CD8-positive, alpha-beta memory T cell (primary cell): ENCODE measurements at regions of chr15 and their contacts with region 1.

Region 1: DNA sequence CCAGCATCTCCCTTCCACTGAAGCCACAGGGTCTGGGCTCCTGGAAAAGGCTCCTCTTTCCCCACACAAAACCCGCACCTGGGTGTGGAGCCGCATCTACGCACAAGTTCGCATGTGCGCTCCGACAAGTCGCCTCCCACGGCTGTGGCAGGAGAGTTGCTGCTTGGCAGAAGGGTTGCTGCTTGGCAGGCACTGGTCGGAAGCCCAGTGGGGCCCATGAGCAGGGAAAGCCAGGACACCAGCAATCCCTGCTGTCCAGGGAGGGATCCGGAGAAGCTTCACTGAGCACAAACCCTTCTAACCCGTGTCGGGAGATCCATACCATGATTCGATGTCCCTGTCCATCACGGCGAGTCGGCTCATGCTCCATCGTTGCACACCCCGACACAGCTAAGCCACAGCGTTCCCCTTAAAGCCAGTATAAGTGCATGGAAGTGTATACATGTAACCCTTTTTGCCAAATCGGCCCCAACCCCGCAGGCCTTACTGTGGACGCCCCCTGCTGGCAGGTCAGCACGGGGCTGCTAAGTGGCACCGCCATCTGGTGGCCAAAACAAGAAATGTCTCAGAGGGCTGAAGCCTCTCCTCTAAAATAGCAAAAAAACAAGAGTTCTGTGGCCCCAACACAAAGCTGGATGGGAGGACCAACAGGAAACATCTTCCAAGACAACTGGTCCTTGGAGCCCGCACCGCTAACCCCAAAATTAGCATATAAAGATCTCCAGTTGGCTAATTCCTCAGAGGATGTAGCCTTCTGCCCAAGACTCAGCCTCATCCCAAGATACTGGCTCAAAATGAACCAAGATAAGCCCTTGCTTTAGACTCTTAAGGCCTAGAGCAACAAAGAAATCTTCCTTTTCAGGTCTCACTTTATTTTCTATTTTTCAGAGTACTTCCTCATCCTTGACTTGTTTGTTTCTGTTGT is 8.3 kb downstream of the ANKRD63 start:
- DNase-seq: peak; percentile 81 to 90 (median 83)
- H3K4me3 ChIP-seq: no peak overlapping the region
- H3K4me3 Mint-ChIP-seq: peak overlapping the region in 1 of 7 donors; percentile 22
- H3K27ac ChIP-seq: no peak overlapping the region
- H3K27ac Mint-ChIP-seq: no peak overlapping the region
- H3K4me1 ChIP-seq: peaks cover 5% of the 10 kb centered on the region
- H3K4me1 Mint-ChIP-seq: peaks cover 4 to 10% (median 5%) of the 10 kb centered on the region in 3 donors
- H3K27me3 ChIP-seq: peaks cover 16% of the 10 kb centered on the region
- H3K27me3 Mint-ChIP-seq: peaks cover 4 to 27% of the 10 kb centered on the region in 2 donors

Region 2: GRCh38 chr15:40044717-40045571 is 229.7 kb before region 1 on chr15:
- CTCF ChIA-PET with region 1: interaction called, 97 read pairs
- POLR2A ChIA-PET with region 1: no interaction called
- DNase-seq: peak; percentile 67 to 86 (median 72)
- H3K4me3 ChIP-seq: peak overlapping the region; percentile 9
- H3K4me3 Mint-ChIP-seq: peak overlapping the region in 6 of 7 donors; percentile 43 to 78 (median 63)
- H3K27ac ChIP-seq: no peak overlapping the region
- H3K27ac Mint-ChIP-seq: peak overlapping the region; percentile 21 to 83 (median 55)
- H3K4me1 ChIP-seq: peaks cover 57% of the 10 kb centered on the region
- H3K4me1 Mint-ChIP-seq: peaks cover 50 to 64% (median 60%) of the 10 kb centered on the region in 3 donors
- H3K27me3 ChIP-seq: no peaks in the 10 kb centered on the region
- H3K27me3 Mint-ChIP-seq: no peaks in the 10 kb centered on the region

Region 3: GRCh38 chr15:40217159-40217824 is 57.3 kb before region 1 on chr15:
- CTCF ChIA-PET with region 1: interaction called, 103 read pairs
- POLR2A ChIA-PET with region 1: interaction called, 4 read pairs
- DNase-seq: peak in 4 of 5 donors; percentile 13 to 64 (median 59)
- H3K4me3 ChIP-seq: no peak overlapping the region
- H3K4me3 Mint-ChIP-seq: no peak overlapping the region
- H3K27ac ChIP-seq: no peak overlapping the region
- H3K27ac Mint-ChIP-seq: no peak overlapping the region
- H3K4me1 ChIP-seq: no peaks in the 10 kb centered on the region
- H3K4me1 Mint-ChIP-seq: no peaks in the 10 kb centered on the region
- H3K27me3 ChIP-seq: no peaks in the 10 kb centered on the region
- H3K27me3 Mint-ChIP-seq: no peaks in the 10 kb centered on the region

Region 4: DNA sequence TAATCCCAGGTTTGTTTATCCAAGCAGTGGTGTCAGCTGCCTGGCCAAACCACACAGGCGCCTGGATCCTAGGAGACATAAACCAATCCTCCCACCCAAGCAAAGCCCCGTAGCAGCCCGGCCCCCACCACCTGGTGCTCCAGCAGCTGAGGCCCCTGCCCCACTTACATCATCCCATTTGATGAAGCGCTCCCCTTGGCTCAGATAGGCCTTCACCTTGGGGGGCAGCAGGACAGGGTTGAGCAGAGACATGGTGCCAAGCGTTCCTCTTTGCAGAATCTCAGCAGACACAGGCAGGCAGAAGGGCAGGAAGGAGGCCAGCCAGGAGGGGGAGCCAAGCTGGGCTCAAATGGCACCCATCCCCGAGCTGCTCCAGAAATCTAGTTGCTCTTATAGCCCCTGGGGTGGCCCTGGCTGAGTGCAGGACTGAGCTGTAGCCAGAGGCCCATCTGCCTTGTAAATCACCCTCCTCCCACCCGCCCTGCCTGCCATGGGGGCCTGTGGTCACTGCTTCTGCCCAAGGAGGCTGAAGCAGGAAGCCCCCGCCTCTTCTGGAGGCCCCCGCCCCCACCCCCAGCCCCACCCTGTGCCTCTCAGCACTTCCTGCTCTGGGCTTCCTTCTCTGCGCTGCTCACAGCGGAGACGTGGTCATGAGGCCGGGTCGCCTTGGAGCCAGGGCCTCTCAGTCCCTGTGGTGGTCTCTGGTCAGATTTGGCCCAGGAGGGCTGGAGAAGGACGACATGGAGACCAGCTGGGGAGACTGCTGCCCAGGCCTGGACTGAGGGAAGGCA is 33.0 kb after region 1 on chr15 and contains the start of gene PLCB2:
- CTCF ChIA-PET with region 1: interaction called, 258 read pairs
- POLR2A ChIA-PET with region 1: interaction called, 3 read pairs
- DNase-seq: peak; percentile 52 to 81 (median 65)
- H3K4me3 ChIP-seq: peak within 1 kb of the TSS; percentile 100
- H3K4me3 Mint-ChIP-seq: peak within 1 kb of the TSS; percentile 93 to 98 (median 97)
- H3K27ac ChIP-seq: peak within 1 kb of the TSS; percentile 85
- H3K27ac Mint-ChIP-seq: peak within 1 kb of the TSS; percentile 92 to 98 (median 94)
- H3K4me1 ChIP-seq: peaks cover 41% of the 10 kb centered on the region
- H3K4me1 Mint-ChIP-seq: peaks cover 47 to 57% (median 55%) of the 10 kb centered on the region in 3 donors
- H3K27me3 ChIP-seq: no peaks in the 10 kb centered on the region
- H3K27me3 Mint-ChIP-seq: no peaks in the 10 kb centered on the region
- total RNA-seq, gene PLCB2: 57.3 to 57.7 TPM

Region 5: GRCh38 chr15:40330368-40330836 is 55.8 kb after region 1 on chr15:
- CTCF ChIA-PET with region 1: interaction called, 268 read pairs
- POLR2A ChIA-PET with region 1: no interaction called
- DNase-seq: no peak
- H3K4me3 ChIP-seq: no peak overlapping the region
- H3K4me3 Mint-ChIP-seq: no peak overlapping the region
- H3K27ac ChIP-seq: peak overlapping the region; percentile 27
- H3K27ac Mint-ChIP-seq: no peak overlapping the region
- H3K4me1 ChIP-seq: peaks cover 17% of the 10 kb centered on the region
- H3K4me1 Mint-ChIP-seq: peaks cover 6 to 16% (median 6%) of the 10 kb centered on the region in 3 donors
- H3K27me3 ChIP-seq: no peaks in the 10 kb centered on the region
- H3K27me3 Mint-ChIP-seq: no peaks in the 10 kb centered on the region

Region 6: DNA sequence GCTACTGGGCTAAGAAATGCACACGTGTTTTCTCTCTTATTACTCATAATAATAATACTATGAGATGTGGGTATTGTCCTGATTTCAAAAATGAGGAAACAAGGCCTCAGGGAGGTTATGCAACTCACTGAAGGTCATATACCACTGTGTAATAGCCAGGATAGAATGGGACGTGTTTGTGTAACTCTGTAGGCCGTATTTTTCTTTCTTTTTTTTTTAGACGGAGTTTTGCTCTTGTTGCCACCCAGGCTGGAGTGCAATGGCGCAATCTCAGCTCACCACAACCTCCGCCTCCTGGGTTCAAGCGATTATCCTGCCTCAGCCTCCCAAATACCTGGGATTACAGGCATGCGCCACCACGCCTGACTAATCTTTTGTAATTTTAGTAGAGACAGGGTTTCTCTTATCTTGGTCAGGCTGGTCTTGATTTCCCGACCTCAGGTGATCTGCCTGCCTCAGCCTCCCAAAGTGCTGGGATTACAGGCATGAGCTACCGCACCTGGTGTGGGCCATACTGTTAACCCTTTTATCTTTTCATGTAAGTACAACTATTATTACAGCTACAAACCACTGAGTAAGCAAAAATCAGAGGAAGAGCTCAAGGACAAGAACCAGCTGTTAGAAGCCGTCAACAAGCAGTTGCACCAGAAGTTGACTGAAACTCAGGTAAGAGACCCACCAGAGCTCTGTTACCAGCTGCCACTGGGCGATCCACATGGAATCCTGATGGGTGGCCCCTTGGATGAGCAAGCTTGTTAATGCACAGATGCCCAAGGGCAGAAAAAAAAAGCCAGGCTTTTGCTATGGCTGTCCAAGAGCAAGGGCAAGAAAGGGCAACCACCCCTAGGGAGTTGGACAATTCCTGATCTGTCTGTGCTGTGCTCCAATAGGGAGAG is 114.6 kb after region 1 on chr15:
- CTCF ChIA-PET with region 1: no interaction called
- POLR2A ChIA-PET with region 1: no interaction called
- DNase-seq: no peak
- H3K4me3 ChIP-seq: no peak overlapping the region
- H3K4me3 Mint-ChIP-seq: no peak overlapping the region
- H3K27ac ChIP-seq: no peak overlapping the region
- H3K27ac Mint-ChIP-seq: peak overlapping the region in 1 of 8 donors; percentile 87
- H3K4me1 ChIP-seq: no peaks in the 10 kb centered on the region
- H3K4me1 Mint-ChIP-seq: peaks cover 3 to 12% (median 10%) of the 10 kb centered on the region in 3 donors
- H3K27me3 ChIP-seq: no peaks in the 10 kb centered on the region
- H3K27me3 Mint-ChIP-seq: no peaks in the 10 kb centered on the region

Region 7: GRCh38 chr15:40405501-40406381 is 131.1 kb after region 1 on chr15 and contains the start of gene IVD:
- CTCF ChIA-PET with region 1: interaction called, 11 read pairs
- POLR2A ChIA-PET with region 1: no interaction called
- DNase-seq: peak; percentile 87 to 93 (median 88)
- H3K4me3 ChIP-seq: peak within 1 kb of the TSS; percentile 85
- H3K4me3 Mint-ChIP-seq: peak within 1 kb of the TSS; percentile 86 to 96 (median 91)
- H3K27ac ChIP-seq: peak within 1 kb of the TSS; percentile 57
- H3K27ac Mint-ChIP-seq: peak within 1 kb of the TSS; percentile 68 to 93 (median 88)
- H3K4me1 ChIP-seq: peaks cover 24% of the 10 kb centered on the region
- H3K4me1 Mint-ChIP-seq: peaks cover 31 to 54% (median 45%) of the 10 kb centered on the region in 3 donors
- H3K27me3 ChIP-seq: no peaks in the 10 kb centered on the region
- H3K27me3 Mint-ChIP-seq: no peaks in the 10 kb centered on the region
- total RNA-seq, gene IVD: 68.5 to 80.1 TPM

Region 8: GRCh38 chr15:40440743-40441564 is 166.3 kb after region 1 on chr15 and contains the start of gene BAHD1:
- CTCF ChIA-PET with region 1: no interaction called
- POLR2A ChIA-PET with region 1: no interaction called
- DNase-seq: peak; percentile 90 to 96 (median 94)
- H3K4me3 ChIP-seq: peak within 1 kb of the TSS; percentile 72
- H3K4me3 Mint-ChIP-seq: peak within 1 kb of the TSS; percentile 92 to 97 (median 95)
- H3K27ac ChIP-seq: peak within 1 kb of the TSS; percentile 66
- H3K27ac Mint-ChIP-seq: peak within 1 kb of the TSS in 7 of 8 donors; percentile 74 to 92 (median 88)
- H3K4me1 ChIP-seq: peaks cover 63% of the 10 kb centered on the region
- H3K4me1 Mint-ChIP-seq: peaks cover 58 to 71% (median 58%) of the 10 kb centered on the region in 3 donors
- H3K27me3 ChIP-seq: peaks cover 6% of the 10 kb centered on the region
- H3K27me3 Mint-ChIP-seq: peaks cover 11 to 15% of the 10 kb centered on the region in 2 donors
- total RNA-seq, gene BAHD1: 23.6 to 24.9 TPM